ENCODE measurements at regions of chr2 and their contacts with region 1.

Region 1: GRCh38 chr2:128062571-128062970 is 28.4 kb upstream of the UGGT1 start:
- DNase-seq: no peak
- H3K4me3 ChIP-seq: no peak overlapping the region
- H3K27me3 ChIP-seq: no peaks in the 10 kb centered on the region
- CTCF ChIP-seq: no peak

Region 2: DNA sequence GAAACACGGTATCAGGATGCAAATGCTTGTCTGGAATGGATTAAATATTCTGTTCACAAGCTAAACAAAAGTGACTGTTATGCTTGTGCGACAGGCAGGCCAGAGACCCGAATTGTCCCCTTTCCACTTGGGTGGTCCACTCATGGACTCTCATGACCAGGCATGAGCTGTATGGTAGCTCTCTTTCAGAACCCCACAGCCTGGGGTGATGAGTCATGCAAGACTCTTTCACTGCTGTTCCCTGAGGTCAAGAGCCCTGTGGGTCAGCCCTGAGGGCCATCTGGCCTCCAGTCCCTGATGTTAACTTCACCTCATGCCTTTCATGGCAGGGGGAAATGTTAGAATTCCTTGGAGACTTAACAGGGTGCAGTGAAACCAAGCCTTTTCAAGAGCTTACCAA is 21.0 kb before region 1 on chr2:
- CTCF ChIA-PET with region 1: interaction called, 10 read pairs
- POLR2A ChIA-PET with region 1: no interaction called
- DNase-seq: no peak
- H3K4me3 ChIP-seq: no peak overlapping the region
- H3K27me3 ChIP-seq: no peaks in the 10 kb centered on the region; the same call in 1 of the 2 replicates
- CTCF ChIP-seq: no peak

Measured in BJ (cell line).